ENCODE measurements at regions of chr18 and their contacts with region 1.

Region 1: DNA sequence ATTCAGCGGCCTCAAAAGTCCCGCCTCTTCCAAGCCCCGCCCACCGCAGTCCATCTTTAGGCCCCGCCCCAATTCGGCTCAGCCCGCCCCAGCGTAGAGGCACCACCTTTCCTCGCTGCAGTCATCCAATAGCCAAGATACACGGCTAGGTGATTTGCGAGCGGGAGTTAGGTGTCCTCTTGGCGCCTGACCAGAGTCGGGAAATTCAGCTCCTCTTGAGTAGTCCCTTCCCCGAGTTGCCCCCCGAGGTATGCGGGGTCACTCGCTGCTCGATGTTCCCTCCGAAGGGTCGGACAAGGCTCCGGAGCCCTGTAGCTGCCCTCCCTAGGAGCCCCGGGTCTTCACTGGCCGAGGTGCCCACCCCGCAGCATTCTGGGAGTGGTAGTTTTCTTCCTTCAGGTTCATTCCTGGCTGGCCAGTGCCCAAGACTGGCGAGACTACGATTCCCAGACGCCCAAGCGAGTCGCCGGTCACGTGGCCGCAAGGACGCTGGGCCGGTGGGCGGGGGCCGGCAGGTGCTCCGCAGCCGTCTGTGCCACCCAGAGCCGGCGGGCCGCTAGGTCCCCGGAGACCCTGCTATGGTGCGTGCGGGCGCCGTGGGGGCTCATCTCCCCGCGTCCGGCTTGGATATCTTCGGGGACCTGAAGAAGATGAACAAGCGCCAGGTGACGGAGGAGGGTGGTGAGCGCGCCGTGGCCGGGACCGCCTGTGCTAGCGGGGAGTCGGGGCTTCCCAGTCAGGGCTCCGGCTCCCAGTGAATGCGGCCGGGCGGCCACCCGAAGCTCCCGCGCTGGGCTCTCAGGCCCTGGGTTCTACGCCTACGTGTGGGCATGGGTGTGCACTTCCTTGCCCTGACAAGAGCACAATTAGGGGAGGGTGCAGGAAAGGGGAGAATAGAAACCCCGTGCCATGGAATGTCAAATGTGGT is at the start of gene SEC11C:
- DNase-seq: peak; percentile 91 to 98 (median 96)
- ATAC-seq: peak; percentile 90
- H3K4me3 ChIP-seq: peak within 1 kb of the TSS; percentile 92 to 99
- H3K4me3 Mint-ChIP-seq: peak within 1 kb of the TSS; percentile 94
- H3K27ac ChIP-seq: peak within 1 kb of the TSS; percentile 98 to 100
- H3K27ac Mint-ChIP-seq: peak within 1 kb of the TSS; percentile 100
- H3K4me1 ChIP-seq: peaks cover 19% of the 10 kb centered on the region
- H3K4me1 Mint-ChIP-seq: peaks cover 42% of the 10 kb centered on the region
- H3K27me3 ChIP-seq: no peaks in the 10 kb centered on the region
- H3K27me3 Mint-ChIP-seq: peaks cover 9% of the 10 kb centered on the region
- CTCF ChIP-seq: no peak
- total RNA-seq, gene SEC11C: 33.8 to 38.5 TPM

Region 2: GRCh38 chr18:59085797-59086196 is 53.8 kb before region 1 on chr18:
- CTCF ChIA-PET with region 1: interaction called, 3 read pairs
- POLR2A ChIA-PET with region 1: no interaction called
- intact Hi-C with region 1: loop called in 1 of 2 experiments (anchors 2 kb)
- DNase-seq: no peak
- ATAC-seq: no peak
- H3K4me3 ChIP-seq: no peak overlapping the region
- H3K4me3 Mint-ChIP-seq: no peak overlapping the region
- H3K27ac ChIP-seq: no peak overlapping the region
- H3K27ac Mint-ChIP-seq: no peak overlapping the region
- H3K4me1 ChIP-seq: no peaks in the 10 kb centered on the region
- H3K4me1 Mint-ChIP-seq: peaks cover 10% of the 10 kb centered on the region
- H3K27me3 ChIP-seq: peaks cover 0 to 5% of the 10 kb centered on the region in 2 experiments
- H3K27me3 Mint-ChIP-seq: peaks cover 19% of the 10 kb centered on the region
- CTCF ChIP-seq: no peak

Region 3: GRCh38 chr18:59358712-59359575 is 219.3 kb after region 1 on chr18 and contains the start of gene LMAN1:
- CTCF ChIA-PET with region 1: no interaction called
- POLR2A ChIA-PET with region 1: no interaction called
- intact Hi-C with region 1: loop called (anchors 1 kb)
- DNase-seq: peak; percentile 77 to 96 (median 92)
- ATAC-seq: peak; percentile 92
- H3K4me3 ChIP-seq: peak within 1 kb of the TSS; percentile 67 to 97
- H3K4me3 Mint-ChIP-seq: peak within 1 kb of the TSS; percentile 97
- H3K27ac ChIP-seq: peak within 1 kb of the TSS; percentile 51 to 86
- H3K27ac Mint-ChIP-seq: peak within 1 kb of the TSS; percentile 92
- H3K4me1 ChIP-seq: peaks cover 21% of the 10 kb centered on the region
- H3K4me1 Mint-ChIP-seq: peaks cover 39% of the 10 kb centered on the region
- H3K27me3 ChIP-seq: no peaks in the 10 kb centered on the region
- H3K27me3 Mint-ChIP-seq: no peaks in the 10 kb centered on the region
- CTCF ChIP-seq: no peak
- total RNA-seq, gene LMAN1: 39.6 to 44.6 TPM

Measured in CD8-positive, alpha-beta T cell (primary cell).